ENCODE measurements at regions of chr6 and their contacts with region 1.

Region 1: GRCh38 chr6:130313206-130313605 is 52.6 kb upstream of the TMEM200A start:
- DNase-seq: no peak
- ATAC-seq: no peak
- H3K4me3 ChIP-seq: no peak overlapping the region
- H3K4me3 Mint-ChIP-seq: no peak overlapping the region
- H3K27ac ChIP-seq: no peak overlapping the region
- H3K27ac Mint-ChIP-seq: no peak overlapping the region
- H3K4me1 ChIP-seq: no peaks in the 10 kb centered on the region
- H3K4me1 Mint-ChIP-seq: no peaks in the 10 kb centered on the region
- H3K27me3 ChIP-seq: no peaks in the 10 kb centered on the region
- H3K27me3 Mint-ChIP-seq: no peaks in the 10 kb centered on the region
- CTCF ChIP-seq: no peak

Region 2: DNA sequence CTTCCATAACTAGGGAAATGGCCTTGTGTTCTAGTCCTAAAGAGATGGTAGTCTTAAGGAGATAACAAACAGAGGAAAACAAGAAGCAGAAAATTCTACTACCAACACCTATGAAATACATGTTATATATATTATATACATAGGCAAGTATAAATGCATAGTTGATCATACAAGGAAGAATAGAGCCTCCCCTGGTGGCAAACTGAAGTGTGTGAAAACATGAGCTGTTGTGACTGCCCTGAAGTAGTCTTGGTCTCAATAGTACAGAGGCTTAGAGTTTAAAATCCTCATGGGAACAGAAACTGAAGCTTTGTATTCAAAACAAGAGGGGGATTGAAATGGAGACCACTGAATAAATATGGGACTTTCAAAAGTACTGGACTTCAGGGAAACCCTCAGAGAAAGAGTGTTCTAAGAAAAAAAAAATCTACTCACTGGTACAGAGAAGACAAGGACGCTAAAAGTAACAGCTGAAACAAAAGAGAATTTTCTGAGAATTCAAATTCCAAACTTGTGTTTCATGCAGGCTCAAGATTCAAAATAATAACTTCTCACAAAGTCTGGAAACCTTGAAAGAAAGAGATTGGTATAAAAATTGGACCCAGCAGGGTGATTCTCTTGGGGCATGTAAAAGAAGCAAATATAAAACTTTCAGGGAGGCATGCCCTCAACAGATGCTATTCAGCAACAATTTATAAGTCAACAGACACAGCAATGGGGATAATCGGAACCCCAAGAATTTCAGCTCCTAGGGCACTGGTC is 30.8 kb before region 1 on chr6:
- CTCF ChIA-PET with region 1: no interaction called
- POLR2A ChIA-PET with region 1: no interaction called
- intact Hi-C with region 1: no loop called
- DNase-seq: peak in 6 of 14 experiments; percentile 11 to 73 (median 53)
- ATAC-seq: peak; percentile 62
- H3K4me3 ChIP-seq: no peak overlapping the region
- H3K4me3 Mint-ChIP-seq: no peak overlapping the region
- H3K27ac ChIP-seq: no peak overlapping the region
- H3K27ac Mint-ChIP-seq: no peak overlapping the region
- H3K4me1 ChIP-seq: peaks cover 6% of the 10 kb centered on the region
- H3K4me1 Mint-ChIP-seq: peaks cover 9% of the 10 kb centered on the region
- H3K27me3 ChIP-seq: no peaks in the 10 kb centered on the region
- H3K27me3 Mint-ChIP-seq: no peaks in the 10 kb centered on the region
- CTCF ChIP-seq: peak; percentile 57

Region 3: GRCh38 chr6:131317516-131317915 is 1004.3 kb after region 1 on chr6:
- CTCF ChIA-PET with region 1: no interaction called
- POLR2A ChIA-PET with region 1: no interaction called
- intact Hi-C with region 1: loop called in 1 of 2 experiments (anchors 5 kb)
- DNase-seq: no peak
- ATAC-seq: no peak
- H3K4me3 ChIP-seq: no peak overlapping the region
- H3K4me3 Mint-ChIP-seq: no peak overlapping the region
- H3K27ac ChIP-seq: no peak overlapping the region
- H3K27ac Mint-ChIP-seq: no peak overlapping the region
- H3K4me1 ChIP-seq: no peaks in the 10 kb centered on the region
- H3K4me1 Mint-ChIP-seq: no peaks in the 10 kb centered on the region
- H3K27me3 ChIP-seq: no peaks in the 10 kb centered on the region
- H3K27me3 Mint-ChIP-seq: no peaks in the 10 kb centered on the region
- CTCF ChIP-seq: no peak

Measured in CD4-positive, alpha-beta T cell (primary cell).